ENCODE measurements at regions of chr7 and their contacts with region 1.

Region 1: GRCh38 chr7:117706191-117706590 is 167.1 kb downstream of the CTTNBP2 start:
- DNase-seq: no peak
- H3K27ac ChIP-seq: no peak overlapping the region
- CTCF ChIP-seq: no peak

Region 2: GRCh38 chr7:117505245-117505644 is 200.9 kb before region 1 on chr7:
- CTCF ChIA-PET with region 1: interaction called, 10 read pairs
- POLR2A ChIA-PET with region 1: no interaction called
- DNase-seq: no peak
- H3K27ac ChIP-seq: no peak overlapping the region
- CTCF ChIP-seq: no peak

Region 3: GRCh38 chr7:117724898-117725297 is 18.7 kb after region 1 on chr7:
- CTCF ChIA-PET with region 1: no interaction called
- POLR2A ChIA-PET with region 1: no interaction called
- DNase-seq: no peak
- H3K27ac ChIP-seq: no peak overlapping the region
- CTCF ChIP-seq: no peak

Region 4: GRCh38 chr7:118080947-118081346 is 374.8 kb after region 1 on chr7:
- CTCF ChIA-PET with region 1: no interaction called
- POLR2A ChIA-PET with region 1: no interaction called
- DNase-seq: peak; percentile 91
- H3K27ac ChIP-seq: no peak overlapping the region
- CTCF ChIP-seq: no peak

Region 5: GRCh38 chr7:118224521-118224920 is 518.3 kb after region 1 on chr7 and contains the start of gene ANKRD7:
- CTCF ChIA-PET with region 1: no interaction called
- POLR2A ChIA-PET with region 1: no interaction called
- DNase-seq: no peak
- H3K27ac ChIP-seq: no peak within 1 kb of the TSS
- CTCF ChIP-seq: no peak